ENCODE measurements at regions of chr7 and their contacts with region 1.

Region 1: DNA sequence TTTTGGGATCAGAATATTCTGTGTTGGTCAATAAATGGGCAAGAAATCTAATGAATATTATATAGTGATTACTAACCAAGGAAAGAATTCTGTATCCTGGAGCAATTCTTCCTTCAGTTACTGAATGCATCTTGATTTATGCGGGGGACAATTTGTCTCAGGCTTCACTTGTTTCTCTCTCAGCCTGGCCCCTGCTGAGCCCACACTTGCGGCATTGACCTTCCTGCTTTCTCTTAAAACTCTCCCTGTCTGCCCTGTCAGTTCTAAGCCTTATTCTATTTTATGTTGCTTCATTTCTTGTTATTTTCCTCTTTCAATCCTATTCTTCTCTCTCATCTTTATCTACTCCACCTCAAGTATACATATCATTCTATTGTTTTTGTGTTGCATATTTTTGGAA is 122.1 kb upstream of the TPK1 start:
- DNase-seq: no peak
- ATAC-seq: no peak
- H3K4me3 Mint-ChIP-seq: no peak overlapping the region
- H3K27ac Mint-ChIP-seq: no peak overlapping the region
- H3K4me1 Mint-ChIP-seq: no peaks in the 10 kb centered on the region
- H3K27me3 Mint-ChIP-seq: no peaks in the 10 kb centered on the region

Region 2: DNA sequence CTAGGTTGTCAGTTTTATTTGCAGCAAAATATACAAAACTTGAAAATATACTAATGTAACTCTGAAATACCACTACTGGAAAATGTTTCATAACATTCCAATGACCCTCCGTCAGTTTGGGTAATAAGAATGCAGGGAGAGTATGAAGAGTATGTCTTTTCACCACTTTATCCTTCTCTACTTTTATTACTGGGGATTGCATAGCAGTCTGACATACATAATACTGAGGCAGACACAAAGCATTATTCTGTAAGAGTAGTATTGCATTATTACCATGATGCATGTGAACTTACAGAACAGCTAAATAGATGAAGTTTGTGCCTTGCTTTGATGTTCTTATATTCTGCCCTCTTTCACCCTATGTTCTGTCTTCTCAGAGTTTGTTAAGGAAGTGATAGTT is 29.7 kb after region 1 on chr7:
- CTCF ChIA-PET with region 1: no interaction called
- POLR2A ChIA-PET with region 1: no interaction called
- intact Hi-C with region 1: loop called in 1 of 2 experiments (anchors 2 kb)
- DNase-seq: no peak
- ATAC-seq: no peak
- H3K4me3 Mint-ChIP-seq: no peak overlapping the region
- H3K27ac Mint-ChIP-seq: no peak overlapping the region
- H3K4me1 Mint-ChIP-seq: no peaks in the 10 kb centered on the region
- H3K27me3 Mint-ChIP-seq: no peaks in the 10 kb centered on the region